A673 (cell line): ENCODE measurements at regions of chr22 and their contacts with region 1.

Region 1: DNA sequence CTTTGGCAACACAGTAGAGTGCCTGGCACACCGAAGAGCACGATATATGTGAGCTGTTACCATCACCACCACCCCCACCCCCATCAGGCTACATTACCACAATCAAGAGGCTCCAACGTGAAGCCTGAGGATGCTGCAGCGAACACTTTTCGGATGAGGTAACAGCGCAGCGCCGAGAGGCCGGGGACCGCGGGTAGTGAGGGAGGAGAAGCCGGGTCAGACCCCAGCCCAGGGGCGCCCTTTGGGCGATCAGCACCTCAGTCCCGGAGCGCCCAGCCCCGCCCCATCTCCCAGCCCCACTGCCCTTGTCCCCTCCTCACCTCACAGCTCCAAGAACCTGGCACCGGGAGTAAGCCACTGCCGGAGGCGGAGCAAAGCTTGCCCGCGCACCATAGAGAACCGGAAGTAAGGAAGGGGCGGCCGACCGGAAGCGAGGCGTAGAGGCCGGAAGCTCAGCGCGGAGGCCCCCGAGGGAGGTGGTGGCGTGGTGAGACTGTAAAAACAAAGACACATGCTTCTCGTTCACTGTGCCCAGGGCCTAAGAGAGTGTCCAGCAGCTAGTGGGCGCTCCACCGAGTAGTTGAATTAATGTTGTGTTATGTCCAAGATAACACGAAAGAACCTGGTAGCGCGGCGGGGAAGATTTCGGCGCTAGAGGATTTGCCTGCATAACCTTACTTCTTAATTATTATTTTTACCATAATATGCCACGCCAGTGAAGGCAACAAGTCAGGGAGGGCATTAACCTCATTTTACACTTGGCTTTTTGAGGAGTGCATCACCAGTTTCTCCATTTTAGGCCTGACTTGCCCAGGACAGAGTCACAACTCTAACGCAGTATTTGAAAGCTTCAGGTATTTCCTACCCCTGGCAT is at the start of gene THOC5:
- DNase-seq: peak; percentile 98
- H3K4me3 ChIP-seq: peak within 1 kb of the TSS; percentile 85
- H3K27ac ChIP-seq: peak within 1 kb of the TSS; percentile 64
- H3K4me1 ChIP-seq: peaks cover 5% of the 10 kb centered on the region
- H3K27me3 ChIP-seq: no peaks in the 10 kb centered on the region
- CTCF ChIP-seq: peak; percentile 82
- total RNA-seq, gene THOC5: 101 and 113 TPM in 2 replicates

Region 2: GRCh38 chr22:29635734-29636357 is 82.3 kb after region 1 on chr22:
- CTCF ChIA-PET with region 1: no interaction called
- POLR2A ChIA-PET with region 1: no interaction called
- intact Hi-C with region 1: no loop called
- DNase-seq: peak; percentile 76
- H3K4me3 ChIP-seq: no peak overlapping the region
- H3K27ac ChIP-seq: no peak overlapping the region
- H3K4me1 ChIP-seq: peaks cover 17% of the 10 kb centered on the region
- H3K27me3 ChIP-seq: peaks cover 9% of the 10 kb centered on the region
- CTCF ChIP-seq: peak; percentile 78

Region 3: GRCh38 chr22:30591588-30592359 is 1038.2 kb after region 1 on chr22 and contains the start of gene PES1:
- CTCF ChIA-PET with region 1: no interaction called
- POLR2A ChIA-PET with region 1: interaction called, 11 read pairs
- intact Hi-C with region 1: no loop called
- DNase-seq: peak; percentile 99
- H3K4me3 ChIP-seq: peak within 1 kb of the TSS; percentile 88
- H3K27ac ChIP-seq: peak within 1 kb of the TSS; percentile 98
- H3K4me1 ChIP-seq: peaks cover 7% of the 10 kb centered on the region
- H3K27me3 ChIP-seq: no peaks in the 10 kb centered on the region
- CTCF ChIP-seq: no peak
- total RNA-seq, gene PES1: 151 and 175 TPM in 2 replicates